CD8-positive, alpha-beta memory T cell (primary cell): ENCODE measurements at regions of chr17 and their contacts with region 1.

Region 1: GRCh38 chr17:55264645-55265298 is at the start of gene HLF:
- DNase-seq: peak; percentile 53 to 76 (median 68)
- H3K4me3 ChIP-seq: peak within 1 kb of the TSS; percentile 40
- H3K4me3 Mint-ChIP-seq: peak within 1 kb of the TSS; percentile 74 to 88 (median 84)
- H3K27ac ChIP-seq: no peak within 1 kb of the TSS
- H3K27ac Mint-ChIP-seq: peak within 1 kb of the TSS in 7 of 8 donors; percentile 24 to 88 (median 67)
- H3K4me1 ChIP-seq: peaks cover 20% of the 10 kb centered on the region
- H3K4me1 Mint-ChIP-seq: peaks cover 14 to 25% (median 16%) of the 10 kb centered on the region in 3 donors
- H3K27me3 ChIP-seq: peaks cover 18% of the 10 kb centered on the region
- H3K27me3 Mint-ChIP-seq: peaks cover 38 to 71% of the 10 kb centered on the region in 2 donors
- total RNA-seq, gene HLF: 0.81 to 0.93 TPM

Region 2: DNA sequence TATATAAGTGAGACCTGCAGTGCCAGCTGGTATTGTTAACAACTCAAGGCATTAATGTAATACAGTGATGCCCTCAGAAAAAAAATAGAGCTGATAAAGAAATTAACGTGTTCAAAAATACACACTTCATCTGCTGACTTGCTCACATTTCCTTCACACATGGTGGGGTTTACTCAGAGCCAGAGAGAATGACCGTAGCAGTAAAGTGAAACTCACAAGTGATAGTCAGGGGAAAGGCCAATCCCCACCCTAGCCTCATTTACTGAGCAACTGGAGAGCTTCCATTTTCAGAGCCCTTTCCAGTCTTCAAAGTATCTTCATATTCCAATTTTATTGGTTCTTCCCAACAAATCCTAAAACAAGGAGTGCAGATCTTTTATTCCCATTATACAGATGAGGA is 74.0 kb before region 1 on chr17:
- CTCF ChIA-PET with region 1: no interaction called
- POLR2A ChIA-PET with region 1: no interaction called
- DNase-seq: no peak
- H3K4me3 ChIP-seq: no peak overlapping the region
- H3K4me3 Mint-ChIP-seq: no peak overlapping the region
- H3K27ac ChIP-seq: no peak overlapping the region
- H3K27ac Mint-ChIP-seq: no peak overlapping the region
- H3K4me1 ChIP-seq: no peaks in the 10 kb centered on the region
- H3K4me1 Mint-ChIP-seq: no peaks in the 10 kb centered on the region
- H3K27me3 ChIP-seq: no peaks in the 10 kb centered on the region
- H3K27me3 Mint-ChIP-seq: peaks cover 3 to 5% of the 10 kb centered on the region in 2 donors

Region 3: GRCh38 chr17:55238179-55238930 is 26.4 kb before region 1 on chr17:
- CTCF ChIA-PET with region 1: interaction called, 13 read pairs
- POLR2A ChIA-PET with region 1: interaction called, 17 read pairs
- DNase-seq: peak; percentile 72 to 90 (median 82)
- H3K4me3 ChIP-seq: peak overlapping the region; percentile 65
- H3K4me3 Mint-ChIP-seq: peak overlapping the region; percentile 81 to 91 (median 86)
- H3K27ac ChIP-seq: peak overlapping the region; percentile 9
- H3K27ac Mint-ChIP-seq: peak overlapping the region in 7 of 8 donors; percentile 41 to 96 (median 86)
- H3K4me1 ChIP-seq: peaks cover 19% of the 10 kb centered on the region
- H3K4me1 Mint-ChIP-seq: peaks cover 19 to 20% (median 19%) of the 10 kb centered on the region in 3 donors
- H3K27me3 ChIP-seq: no peaks in the 10 kb centered on the region
- H3K27me3 Mint-ChIP-seq: peaks cover 14 to 20% of the 10 kb centered on the region in 2 donors

Region 4: DNA sequence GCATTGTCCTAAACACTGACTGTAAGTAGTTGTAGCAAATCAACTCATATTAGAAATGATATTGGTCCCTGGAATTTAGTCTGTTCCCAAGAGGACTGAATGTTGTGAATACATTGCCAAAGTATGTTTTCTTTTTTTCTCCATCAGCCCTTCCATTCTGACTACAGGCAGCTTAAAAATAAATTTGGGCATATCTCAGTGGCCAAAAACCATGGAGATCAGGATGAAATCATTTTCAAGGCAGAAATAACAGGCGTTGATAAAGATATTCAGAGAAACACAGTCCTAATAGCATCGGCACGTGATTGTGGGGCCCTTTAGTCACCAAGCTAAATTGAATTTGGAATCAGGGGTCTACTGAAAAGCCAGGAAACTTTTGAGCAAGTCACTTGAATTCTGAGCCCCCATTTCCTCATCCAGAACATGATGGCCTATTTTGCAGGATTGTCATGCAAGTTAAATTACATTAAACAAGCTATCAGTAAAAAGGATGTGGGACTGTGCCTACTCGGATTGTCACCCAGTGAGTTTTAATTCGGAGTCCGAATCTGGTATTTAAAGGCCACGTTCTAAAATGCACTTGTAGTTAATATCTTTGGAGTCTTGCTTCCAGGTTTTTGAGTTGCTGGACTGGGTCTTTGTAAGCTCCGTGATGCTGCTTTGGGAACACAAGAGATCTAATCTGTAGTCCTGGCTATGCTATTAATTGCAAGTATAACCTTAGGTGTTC is 17.0 kb after region 1 on chr17:
- CTCF ChIA-PET with region 1: no interaction called
- POLR2A ChIA-PET with region 1: no interaction called
- DNase-seq: no peak
- H3K4me3 ChIP-seq: no peak overlapping the region
- H3K4me3 Mint-ChIP-seq: no peak overlapping the region
- H3K27ac ChIP-seq: no peak overlapping the region
- H3K27ac Mint-ChIP-seq: no peak overlapping the region
- H3K4me1 ChIP-seq: no peaks in the 10 kb centered on the region
- H3K4me1 Mint-ChIP-seq: peaks cover 0 to 5% (median 0%) of the 10 kb centered on the region in 3 donors
- H3K27me3 ChIP-seq: no peaks in the 10 kb centered on the region
- H3K27me3 Mint-ChIP-seq: peaks cover 0 to 4% of the 10 kb centered on the region in 2 donors

Region 5: GRCh38 chr17:55366020-55366481 is 101.3 kb after region 1 on chr17:
- CTCF ChIA-PET with region 1: no interaction called
- POLR2A ChIA-PET with region 1: no interaction called
- DNase-seq: no peak
- H3K4me3 ChIP-seq: no peak overlapping the region
- H3K4me3 Mint-ChIP-seq: no peak overlapping the region
- H3K27ac ChIP-seq: no peak overlapping the region
- H3K27ac Mint-ChIP-seq: no peak overlapping the region
- H3K4me1 ChIP-seq: no peaks in the 10 kb centered on the region
- H3K4me1 Mint-ChIP-seq: peaks cover 0 to 4% (median 3%) of the 10 kb centered on the region in 3 donors
- H3K27me3 ChIP-seq: no peaks in the 10 kb centered on the region
- H3K27me3 Mint-ChIP-seq: peaks cover 8 to 9% of the 10 kb centered on the region in 2 donors